Mammary epithelial cell (primary cell): ENCODE measurements at regions of chr12 and their contacts with region 1.

Region 1: DNA sequence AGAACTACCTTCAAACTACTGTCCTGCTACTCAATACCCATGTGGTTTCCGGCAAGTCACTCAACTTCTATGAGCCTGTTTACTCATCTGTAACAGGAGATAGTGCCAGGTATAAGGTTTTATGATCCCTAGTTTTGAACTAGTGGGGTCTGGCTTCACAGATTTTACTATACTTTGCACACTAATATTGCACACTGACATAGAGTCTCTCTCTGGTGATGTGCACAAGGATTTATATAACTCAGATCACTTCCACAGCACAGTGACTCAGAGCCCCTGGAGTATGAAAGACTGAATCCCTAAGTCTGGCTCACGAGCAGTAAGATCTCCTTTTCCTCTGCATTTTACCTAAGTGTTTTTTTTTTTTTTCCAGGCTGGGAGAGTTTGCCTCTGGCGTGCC is 69.7 kb upstream of the SLC38A2 start:
- DNase-seq: peak; percentile 73
- H3K4me3 ChIP-seq: peak overlapping the region in 2 of 3 experiments; percentile 7 to 10
- H3K27ac ChIP-seq: peak overlapping the region; percentile 96
- H3K4me1 ChIP-seq: peaks cover 60% of the 10 kb centered on the region
- H3K27me3 ChIP-seq: no peaks in the 10 kb centered on the region
- CTCF ChIP-seq: no peak

Region 2: GRCh38 chr12:46372544-46373110 is 69.6 kb before region 1 on chr12 and contains the start of gene SLC38A2:
- CTCF ChIA-PET with region 1: no interaction called
- dilution Hi-C with region 1: no loop called
- in situ Hi-C with region 1: no loop called
- intact Hi-C with region 1: loop called (anchors 2 kb)
- DNase-seq: peak; percentile 91
- H3K4me3 ChIP-seq: peak within 1 kb of the TSS; percentile 91 to 95 (median 92)
- H3K27ac ChIP-seq: peak within 1 kb of the TSS; percentile 98
- H3K4me1 ChIP-seq: peaks cover 27% of the 10 kb centered on the region
- H3K27me3 ChIP-seq: no peaks in the 10 kb centered on the region
- CTCF ChIP-seq: no peak
- total RNA-seq, gene SLC38A2: 774 to 995 TPM

Region 3: GRCh38 chr12:46382964-46383653 is 59.1 kb before region 1 on chr12:
- CTCF ChIA-PET with region 1: no interaction called
- dilution Hi-C with region 1: no loop called
- in situ Hi-C with region 1: loop called in 1 of 2 experiments (anchors 5 kb)
- intact Hi-C with region 1: loop called (anchors 1 kb)
- DNase-seq: peak; percentile 95
- H3K4me3 ChIP-seq: peak overlapping the region; percentile 60 to 68 (median 64)
- H3K27ac ChIP-seq: peak overlapping the region; percentile 96
- H3K4me1 ChIP-seq: peaks cover 50% of the 10 kb centered on the region
- H3K27me3 ChIP-seq: no peaks in the 10 kb centered on the region
- CTCF ChIP-seq: peak in 1 of 2 donors; percentile 8

Region 4: DNA sequence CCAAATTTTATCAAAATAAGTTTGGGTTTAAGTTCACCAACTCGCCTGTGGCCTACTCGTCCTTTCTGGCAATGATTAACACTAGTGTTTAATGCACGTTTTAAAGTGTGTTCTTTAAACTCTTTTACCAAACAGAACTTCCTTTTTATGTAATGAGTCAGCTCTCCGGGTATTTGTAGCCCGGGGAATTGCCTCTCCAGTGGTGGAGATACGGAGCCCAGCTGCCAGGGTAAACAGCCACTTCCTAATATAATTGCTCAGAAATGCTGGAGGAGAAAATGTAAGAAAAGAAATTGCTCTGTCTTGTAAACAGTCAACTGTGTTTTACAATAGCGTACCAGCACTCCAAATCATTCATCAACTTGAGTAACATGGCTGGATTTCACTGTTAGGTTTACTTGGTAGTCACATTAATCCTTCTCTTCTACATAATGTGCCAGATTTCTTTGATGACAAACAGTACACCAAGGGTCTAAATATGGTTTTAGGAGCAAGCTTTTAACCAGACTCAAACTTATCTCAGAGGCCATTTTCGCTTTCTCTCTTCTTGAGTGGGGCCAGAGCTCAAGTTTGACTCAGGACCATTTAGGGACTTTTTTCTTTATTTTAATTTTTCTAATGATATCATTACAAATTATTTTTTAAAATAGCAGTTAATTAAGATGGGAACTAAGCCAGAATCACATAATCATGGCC is 31.5 kb after region 1 on chr12:
- CTCF ChIA-PET with region 1: no interaction called
- dilution Hi-C with region 1: no loop called
- in situ Hi-C with region 1: no loop called
- intact Hi-C with region 1: loop called (anchors 1 kb)
- DNase-seq: peak; percentile 83
- H3K4me3 ChIP-seq: peak overlapping the region in 1 of 3 experiments; percentile 11
- H3K27ac ChIP-seq: peak overlapping the region; percentile 67
- H3K4me1 ChIP-seq: peaks cover 38% of the 10 kb centered on the region
- H3K27me3 ChIP-seq: no peaks in the 10 kb centered on the region
- CTCF ChIP-seq: no peak

Region 5: DNA sequence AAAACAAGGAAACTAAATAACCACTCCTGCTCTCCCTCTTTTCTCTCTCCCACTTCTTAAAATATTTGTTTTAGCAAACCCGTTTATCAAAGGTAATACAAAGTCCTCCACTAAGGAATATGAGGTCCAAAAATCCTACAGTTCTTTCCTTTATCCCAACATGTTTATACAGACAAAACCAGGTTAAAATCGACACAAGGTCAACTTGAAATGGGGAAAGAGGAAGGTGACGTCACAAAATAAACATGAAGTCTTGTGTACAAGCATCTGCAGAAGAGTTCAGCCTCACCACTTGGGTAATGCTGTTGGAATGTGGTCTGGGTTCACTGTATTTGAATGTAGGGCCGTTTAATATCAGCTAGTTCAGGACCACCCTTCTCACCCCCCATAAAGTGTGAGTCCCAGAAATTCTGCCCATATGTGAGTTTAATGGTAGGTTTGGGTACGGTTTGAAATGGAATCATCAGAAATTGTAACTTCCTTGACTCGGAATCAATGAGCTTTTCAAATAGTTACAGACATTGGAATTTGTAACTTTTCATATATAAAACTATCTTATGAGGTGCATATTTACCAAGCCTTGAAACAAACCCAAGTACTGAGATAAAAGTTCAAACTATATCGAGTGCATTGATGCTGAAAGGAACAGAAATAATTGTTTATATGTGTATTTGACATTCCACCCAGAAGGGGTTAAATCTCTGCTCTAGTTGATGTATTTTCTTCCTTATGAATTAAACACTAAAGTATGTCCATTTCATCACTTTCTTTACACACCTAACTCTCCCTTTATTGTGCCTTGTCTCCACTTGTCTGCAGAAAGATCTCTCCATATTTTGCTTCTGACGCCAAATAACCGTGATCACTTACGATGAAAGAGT is 50.5 kb after region 1 on chr12:
- CTCF ChIA-PET with region 1: no interaction called
- dilution Hi-C with region 1: no loop called
- in situ Hi-C with region 1: no loop called
- intact Hi-C with region 1: loop called (anchors 5 kb)
- DNase-seq: peak; percentile 85
- H3K4me3 ChIP-seq: no peak overlapping the region
- H3K27ac ChIP-seq: peak overlapping the region; percentile 94
- H3K4me1 ChIP-seq: peaks cover 56% of the 10 kb centered on the region
- H3K27me3 ChIP-seq: no peaks in the 10 kb centered on the region
- CTCF ChIP-seq: peak; percentile 12 to 17

Region 6: GRCh38 chr12:46752396-46752795 is 310.2 kb after region 1 on chr12:
- CTCF ChIA-PET with region 1: no interaction called
- dilution Hi-C with region 1: no loop called
- in situ Hi-C with region 1: no loop called
- intact Hi-C with region 1: no loop called
- DNase-seq: peak; percentile 60
- H3K4me3 ChIP-seq: no peak overlapping the region
- H3K27ac ChIP-seq: no peak overlapping the region
- H3K4me1 ChIP-seq: peaks cover 2% of the 10 kb centered on the region
- H3K27me3 ChIP-seq: no peaks in the 10 kb centered on the region
- CTCF ChIP-seq: no peak